K562 (cell line): ENCODE measurements at regions of chr2 and their contacts with region 1.

Region 1: DNA sequence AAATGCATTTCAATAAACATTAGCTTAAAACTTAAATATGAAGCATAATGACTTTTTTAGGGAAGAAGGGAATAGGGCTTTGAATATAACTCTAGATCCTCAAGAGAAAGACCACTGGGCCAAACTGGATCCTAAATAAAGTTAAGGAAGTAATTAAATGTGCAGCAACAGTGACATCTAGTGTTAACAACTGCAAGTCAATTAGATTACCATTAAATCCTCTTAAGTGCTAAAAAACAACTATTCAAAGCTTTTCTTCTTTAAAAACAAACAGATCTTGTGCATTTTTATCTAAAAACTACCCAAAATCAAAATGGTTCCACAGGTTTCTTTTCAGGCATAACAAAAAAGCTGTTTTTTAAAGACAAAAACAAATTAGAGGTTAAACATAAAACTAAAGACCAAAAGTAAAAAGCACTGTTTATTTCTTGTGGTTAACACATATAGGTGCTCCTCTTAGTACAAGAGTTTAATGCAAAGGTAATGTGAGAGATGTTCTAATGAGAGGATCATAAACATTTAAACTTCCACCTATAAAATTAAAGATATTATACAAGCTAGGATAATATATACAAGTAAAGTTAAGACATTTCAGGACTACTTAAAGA is 111.4 kb downstream of the THADA start:
- DNase-seq: peak; percentile 15 to 81 (median 27)
- ATAC-seq: peak; percentile 83
- H3K4me3 ChIP-seq: no peak overlapping the region
- H3K27ac ChIP-seq: no peak overlapping the region
- H3K4me1 ChIP-seq: no peaks in the 10 kb centered on the region
- H3K27me3 ChIP-seq: no peaks in the 10 kb centered on the region
- CTCF ChIP-seq: peak in 2 of 3 experiments; percentile 44 to 79; a peak in 4 of 6 replicates
- EP300 ChIP-seq: no peak
- POLR2A ChIP-seq: no peak
- RAD21 ChIP-seq: peak; percentile 92 to 93

Region 2: DNA sequence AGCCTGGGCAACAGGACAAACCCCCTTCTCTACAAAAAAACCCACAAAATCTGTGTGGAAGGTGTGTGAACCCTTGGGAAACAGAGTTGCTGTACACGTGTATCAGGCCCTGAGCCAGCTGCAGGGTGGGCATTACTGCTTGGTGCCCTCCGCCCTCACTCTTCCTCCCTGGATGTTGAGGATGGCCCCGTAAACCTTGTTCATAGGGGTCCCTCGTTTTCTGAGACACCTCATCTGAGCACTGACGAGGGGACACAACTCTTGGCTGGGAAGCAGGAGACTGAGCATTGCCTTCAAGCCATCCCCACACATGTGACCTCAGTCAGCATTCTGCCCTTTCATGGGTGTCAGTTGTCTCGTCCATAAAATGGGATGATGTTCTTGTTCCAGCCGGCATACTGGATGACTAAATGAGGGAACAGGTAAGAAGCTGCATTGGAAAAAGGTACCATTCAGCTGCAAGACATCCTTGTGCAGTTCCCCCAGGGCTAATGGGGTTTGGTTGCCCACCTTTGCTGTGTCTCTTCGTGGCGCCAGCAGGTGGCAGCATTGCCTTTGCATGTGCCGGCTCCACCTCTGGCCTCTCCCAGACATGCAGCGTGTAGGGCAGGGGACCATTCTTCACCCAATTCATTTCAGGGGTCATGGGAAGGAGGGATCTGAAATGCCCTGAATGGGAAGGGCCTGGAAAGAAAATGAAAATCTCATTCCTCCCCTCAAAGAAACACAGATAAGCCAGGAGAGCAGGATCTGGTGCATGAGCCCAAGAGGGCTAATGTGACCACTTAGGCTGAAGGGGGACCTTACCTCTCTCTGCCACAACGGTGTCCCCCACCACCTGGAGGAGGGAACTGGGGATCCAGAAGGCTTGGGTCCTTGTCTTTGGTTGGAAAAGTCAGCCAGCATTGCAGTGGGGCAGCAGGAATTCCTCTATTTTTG is 655.7 kb before region 1 on chr2:
- CTCF ChIA-PET with region 1: interaction called, 28 read pairs
- POLR2A ChIA-PET with region 1: no interaction called
- in situ Hi-C with region 1: loop called (anchors 10 kb)
- intact Hi-C with region 1: loop called (anchors 2 kb)
- DNase-seq: peak; percentile 78 to 88 (median 82)
- ATAC-seq: peak; percentile 96
- H3K4me3 ChIP-seq: no peak overlapping the region
- H3K27ac ChIP-seq: no peak overlapping the region
- H3K4me1 ChIP-seq: peaks cover 3 to 9% of the 10 kb centered on the region in 2 experiments; a peak in 2 of 5 replicates
- H3K27me3 ChIP-seq: no peaks in the 10 kb centered on the region; a peak in 1 of 5 replicates
- CTCF ChIP-seq: peak; percentile 89 to 97 (median 95)
- EP300 ChIP-seq: no peak
- POLR2A ChIP-seq: no peak
- RAD21 ChIP-seq: peak; percentile 81 to 94

Region 3: DNA sequence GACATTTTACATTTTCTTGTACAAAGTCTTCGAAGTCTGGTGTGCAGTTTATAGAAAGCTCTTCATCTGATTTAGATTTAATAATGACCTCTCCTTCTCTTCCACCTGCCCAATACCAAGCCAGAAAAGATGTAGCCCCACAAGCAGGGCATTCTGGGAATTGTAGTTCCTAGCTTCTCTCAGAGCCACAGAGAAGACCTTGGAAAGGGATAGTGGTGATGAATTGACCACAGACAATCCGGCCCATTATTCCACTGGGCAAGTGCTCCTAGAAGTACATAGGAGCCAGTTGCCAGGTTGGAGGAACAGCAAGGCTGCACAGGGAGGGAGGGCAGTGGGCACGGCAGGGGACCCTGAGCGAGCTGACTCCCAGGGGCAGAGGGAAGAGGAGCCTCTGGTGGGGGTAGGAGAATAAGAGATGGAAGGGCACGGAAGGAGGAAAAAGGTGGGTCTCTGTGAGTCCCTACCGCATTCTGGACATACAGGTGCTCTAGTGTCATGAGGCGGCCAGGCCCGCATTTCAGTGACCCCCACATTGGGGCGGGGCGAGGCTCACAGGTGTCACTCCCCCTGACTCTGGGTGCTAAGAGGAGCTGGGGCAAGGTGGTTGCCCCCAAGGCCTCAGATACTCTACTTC is 539.5 kb before region 1 on chr2:
- CTCF ChIA-PET with region 1: interaction called, 20 read pairs
- POLR2A ChIA-PET with region 1: no interaction called
- in situ Hi-C with region 1: no loop called
- intact Hi-C with region 1: loop called (anchors 1 kb)
- DNase-seq: peak in 2 of 4 experiments; percentile 44 to 47
- ATAC-seq: peak; percentile 76
- H3K4me3 ChIP-seq: no peak overlapping the region
- H3K27ac ChIP-seq: no peak overlapping the region
- H3K4me1 ChIP-seq: peaks cover 2 to 18% of the 10 kb centered on the region in 2 experiments; a peak in 4 of 5 replicates
- H3K27me3 ChIP-seq: no peaks in the 10 kb centered on the region
- CTCF ChIP-seq: no peak
- EP300 ChIP-seq: no peak
- POLR2A ChIP-seq: no peak
- RAD21 ChIP-seq: no peak

Region 4: DNA sequence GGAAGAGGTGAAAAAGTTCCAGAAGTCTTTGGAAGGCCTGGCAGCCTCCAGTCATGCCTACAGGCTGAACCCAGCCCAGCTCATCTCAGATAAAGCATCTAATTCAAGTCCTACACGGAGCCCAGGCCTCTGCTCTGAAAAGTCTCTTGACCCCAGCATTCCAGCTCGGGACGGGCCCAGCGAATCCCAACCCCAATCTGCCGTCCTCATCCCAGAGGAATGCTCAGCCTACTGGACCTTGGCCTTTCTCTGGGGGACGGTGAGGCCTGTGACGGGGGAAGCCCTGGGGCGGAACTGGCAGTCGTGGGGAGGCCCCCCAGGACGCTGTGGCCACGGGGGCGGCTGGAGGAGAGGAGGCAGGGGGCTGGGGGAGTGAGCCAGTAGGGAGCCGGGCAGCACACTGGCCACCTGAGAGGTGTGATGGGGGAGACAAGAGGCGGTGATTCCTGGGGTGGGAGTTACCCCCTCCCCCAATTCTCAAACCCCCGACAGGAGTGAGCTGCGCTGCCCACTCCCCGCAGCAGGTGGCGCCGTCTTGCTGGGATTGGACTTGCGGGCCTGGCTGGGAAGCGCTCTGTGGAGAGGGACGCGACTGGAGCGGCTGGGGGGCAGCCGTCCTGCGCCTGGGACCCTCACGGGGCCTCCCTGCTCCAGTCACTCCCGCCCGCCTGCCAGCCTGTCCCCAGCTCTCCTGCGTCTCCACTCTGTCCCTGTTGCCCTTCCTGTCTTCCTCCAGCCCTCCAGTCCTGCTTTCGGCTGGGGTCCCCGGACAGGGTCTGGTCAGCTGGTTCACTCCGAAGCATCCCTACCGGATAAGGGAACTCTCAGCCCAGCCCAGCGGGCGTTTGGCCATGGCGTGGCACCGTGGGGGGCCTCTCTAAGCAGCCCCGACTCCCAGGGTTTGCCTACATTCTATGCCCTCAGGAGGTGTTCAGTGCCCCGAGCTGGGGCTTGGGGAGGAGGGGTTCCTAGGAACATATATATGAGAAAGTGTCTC is 509.4 kb before region 1 on chr2:
- CTCF ChIA-PET with region 1: no interaction called
- POLR2A ChIA-PET with region 1: no interaction called
- in situ Hi-C with region 1: no loop called
- intact Hi-C with region 1: loop called (anchors 10 kb)
- DNase-seq: peak; percentile 66 to 76 (median 75)
- ATAC-seq: peak; percentile 89
- H3K4me3 ChIP-seq: no peak overlapping the region
- H3K27ac ChIP-seq: no peak overlapping the region
- H3K4me1 ChIP-seq: peaks cover 0 to 30% of the 10 kb centered on the region in 2 experiments; a peak in 3 of 5 replicates
- H3K27me3 ChIP-seq: no peaks in the 10 kb centered on the region
- CTCF ChIP-seq: peak; percentile 79 to 88 (median 87)
- EP300 ChIP-seq: no peak
- POLR2A ChIP-seq: no peak
- RAD21 ChIP-seq: peak; percentile 85 to 92

Region 5: GRCh38 chr2:43131024-43131889 is 353.2 kb before region 1 on chr2:
- CTCF ChIA-PET with region 1: no interaction called
- POLR2A ChIA-PET with region 1: no interaction called
- in situ Hi-C with region 1: loop called (anchors 10 kb)
- intact Hi-C with region 1: loop called (anchors 1 kb)
- DNase-seq: peak; percentile 76 to 79 (median 77)
- ATAC-seq: peak; percentile 83
- H3K4me3 ChIP-seq: no peak overlapping the region
- H3K27ac ChIP-seq: peak overlapping the region; percentile 45; the same call in 2 of the 3 replicates
- H3K4me1 ChIP-seq: peaks cover 23 to 47% of the 10 kb centered on the region in 2 experiments; a peak in 4 of 5 replicates
- H3K27me3 ChIP-seq: no peaks in the 10 kb centered on the region
- CTCF ChIP-seq: peak; percentile 64 to 71 (median 66)
- EP300 ChIP-seq: peak; percentile 5; the same call in 1 of the 2 replicates
- POLR2A ChIP-seq: no peak
- RAD21 ChIP-seq: peak; percentile 54 to 83

Region 6: GRCh38 chr2:43331422-43331821 is 153.0 kb before region 1 on chr2:
- CTCF ChIA-PET with region 1: no interaction called
- POLR2A ChIA-PET with region 1: no interaction called
- in situ Hi-C with region 1: no loop called
- intact Hi-C with region 1: loop called (anchors 1 kb)
- DNase-seq: peak; percentile 42 to 83 (median 64)
- ATAC-seq: peak; percentile 93
- H3K4me3 ChIP-seq: no peak overlapping the region
- H3K27ac ChIP-seq: no peak overlapping the region
- H3K4me1 ChIP-seq: peaks cover 6 to 18% of the 10 kb centered on the region in 2 experiments; a peak in 4 of 5 replicates
- H3K27me3 ChIP-seq: no peaks in the 10 kb centered on the region
- CTCF ChIP-seq: no peak
- EP300 ChIP-seq: peak; percentile 46
- POLR2A ChIP-seq: no peak
- RAD21 ChIP-seq: peak; percentile 27 to 31; a peak in 2 of 4 replicates